ENCODE measurements at regions of chr16 and their contacts with region 1.

Region 1: DNA sequence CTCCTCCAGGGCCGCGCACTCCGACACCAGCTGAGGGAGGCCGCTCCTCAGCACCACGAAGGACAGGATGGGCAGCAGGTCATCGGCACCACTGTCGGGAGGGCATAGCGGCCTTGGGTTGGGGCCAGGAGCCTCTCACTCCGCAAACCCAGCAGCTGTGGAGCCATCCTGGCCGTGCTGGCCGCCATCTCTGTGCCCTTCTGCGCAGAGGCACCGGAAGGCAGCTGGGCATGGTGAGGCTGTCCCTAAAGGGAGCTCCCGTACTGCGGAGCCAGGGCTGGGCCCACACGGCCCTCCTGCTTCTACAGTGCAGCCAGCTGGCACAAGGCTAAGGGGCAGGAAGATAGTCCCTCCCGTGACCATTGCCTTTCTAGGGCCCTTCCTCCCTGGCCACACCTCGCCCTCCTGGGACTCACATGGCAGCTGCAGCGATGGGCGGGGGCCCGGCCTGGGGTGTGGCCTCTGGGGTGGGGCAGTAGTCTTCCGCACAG is 7.0 kb upstream of the SPATA2L start:
- DNase-seq: no peak

Region 2: DNA sequence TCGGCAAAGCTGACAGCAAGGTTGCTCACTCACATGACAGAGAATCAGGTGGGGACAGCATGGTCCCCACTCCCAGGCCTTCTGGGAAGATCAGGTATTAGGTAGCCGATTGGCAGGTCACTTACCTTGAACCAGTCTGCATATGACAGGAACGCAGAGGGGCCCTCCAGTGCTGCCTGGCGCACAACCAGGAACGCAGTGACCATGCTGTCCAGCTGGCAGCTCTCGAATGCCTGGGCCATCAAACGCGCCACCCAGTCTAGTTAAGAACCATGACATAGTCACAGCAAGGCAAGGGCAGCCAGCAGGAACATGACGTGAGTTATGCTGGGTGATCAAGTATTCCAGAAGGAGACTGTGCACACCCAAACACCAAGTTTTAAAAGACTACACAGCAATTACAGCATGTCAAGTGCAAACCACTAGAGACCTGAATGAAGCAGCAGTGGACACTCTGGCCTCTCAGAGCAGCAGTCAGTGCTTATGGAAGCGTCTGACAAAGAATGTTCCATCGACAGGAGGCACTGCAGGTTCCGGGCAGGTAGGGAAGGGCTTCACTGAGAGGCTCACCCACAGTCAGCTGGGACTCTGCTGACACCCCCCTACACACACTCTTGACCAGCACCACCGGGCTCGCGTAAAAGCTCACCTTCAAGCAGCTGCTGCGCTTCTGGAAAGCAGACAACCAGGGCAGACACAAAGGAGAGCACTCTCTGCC is 83.0 kb after region 1 on chr16:
- intact Hi-C with region 1: loop called (anchors 5 to 10 kb)
- DNase-seq: no peak

Measured in posterior vena cava (tissue), 2 donors.